Activated CD8-positive, alpha-beta T cell treated with anti-CD3 and anti-CD28 coated beads for 36 hours (primary cell): ENCODE measurements at regions of chr15 and their contacts with region 1.

Region 1: GRCh38 chr15:60548101-60548500 is 69.2 kb upstream of the ICE2 start:
- DNase-seq: peak; percentile 86
- ATAC-seq: peak; percentile 81
- H3K4me3 Mint-ChIP-seq: peak overlapping the region; percentile 70
- H3K27ac Mint-ChIP-seq: peak overlapping the region; percentile 96
- H3K4me1 Mint-ChIP-seq: peaks cover 93% of the 10 kb centered on the region
- H3K27me3 Mint-ChIP-seq: no peaks in the 10 kb centered on the region
- CTCF ChIP-seq: no peak

Region 2: GRCh38 chr15:60448668-60449360 is 99.3 kb before region 1 on chr15:
- CTCF ChIA-PET with region 1: no interaction called
- POLR2A ChIA-PET with region 1: no interaction called
- intact Hi-C with region 1: no loop called
- DNase-seq: no peak
- ATAC-seq: no peak
- H3K4me3 Mint-ChIP-seq: no peak overlapping the region
- H3K27ac Mint-ChIP-seq: no peak overlapping the region
- H3K4me1 Mint-ChIP-seq: no peaks in the 10 kb centered on the region
- H3K27me3 Mint-ChIP-seq: no peaks in the 10 kb centered on the region
- CTCF ChIP-seq: no peak

Region 3: GRCh38 chr15:60469893-60470641 is 78.0 kb before region 1 on chr15:
- CTCF ChIA-PET with region 1: no interaction called
- POLR2A ChIA-PET with region 1: no interaction called
- intact Hi-C with region 1: no loop called
- DNase-seq: no peak
- ATAC-seq: no peak
- H3K4me3 Mint-ChIP-seq: no peak overlapping the region
- H3K27ac Mint-ChIP-seq: peak overlapping the region; percentile 17
- H3K4me1 Mint-ChIP-seq: peaks cover 25% of the 10 kb centered on the region
- H3K27me3 Mint-ChIP-seq: no peaks in the 10 kb centered on the region
- CTCF ChIP-seq: no peak

Region 4: GRCh38 chr15:60568301-60568742 is 20.2 kb after region 1 on chr15:
- CTCF ChIA-PET with region 1: interaction called, 17 read pairs
- POLR2A ChIA-PET with region 1: interaction called, 10 read pairs
- intact Hi-C with region 1: no loop called
- DNase-seq: peak; percentile 39
- ATAC-seq: peak; percentile 17
- H3K4me3 Mint-ChIP-seq: peak overlapping the region; percentile 36
- H3K27ac Mint-ChIP-seq: peak overlapping the region; percentile 78
- H3K4me1 Mint-ChIP-seq: peaks cover 89% of the 10 kb centered on the region
- H3K27me3 Mint-ChIP-seq: no peaks in the 10 kb centered on the region
- CTCF ChIP-seq: no peak

Region 5: DNA sequence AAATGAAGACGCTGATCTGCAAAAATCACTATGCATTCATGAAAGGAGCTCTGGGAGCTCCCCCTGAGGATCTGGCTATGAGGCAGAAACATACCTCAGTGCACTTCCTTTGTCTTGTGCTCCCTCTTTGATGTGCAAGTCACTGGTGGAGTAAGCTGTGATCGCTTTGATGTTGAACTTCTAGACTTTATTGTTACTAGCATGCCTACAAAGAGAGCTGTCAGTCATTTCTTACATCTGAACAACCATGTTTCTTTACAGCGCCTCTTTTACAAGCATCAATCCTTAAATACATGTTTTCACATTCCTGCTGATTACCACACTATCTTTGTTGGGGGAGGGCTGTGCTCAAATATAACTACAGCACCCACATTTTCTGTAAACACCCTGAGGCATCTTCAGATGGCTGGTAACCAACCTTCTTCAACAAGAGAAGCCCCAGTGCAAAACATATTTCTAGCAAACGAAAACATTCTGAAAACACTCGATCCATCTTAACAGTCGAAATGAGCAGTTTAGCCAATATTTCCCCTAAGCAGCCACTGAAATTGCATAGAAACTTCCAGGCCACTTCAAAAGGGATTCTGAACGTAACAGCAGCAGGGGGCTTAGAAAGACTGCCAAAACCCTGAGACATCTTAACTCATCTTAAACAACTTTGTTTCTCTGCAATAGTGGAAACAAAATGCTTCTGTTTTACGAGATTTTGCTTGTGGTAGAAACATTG is 32.7 kb after region 1 on chr15:
- CTCF ChIA-PET with region 1: interaction called, 42 read pairs
- POLR2A ChIA-PET with region 1: interaction called, 11 read pairs
- intact Hi-C with region 1: loop called (anchors 5 kb)
- DNase-seq: peak; percentile 51
- ATAC-seq: peak; percentile 64
- H3K4me3 Mint-ChIP-seq: peak overlapping the region; percentile 72
- H3K27ac Mint-ChIP-seq: peak overlapping the region; percentile 96
- H3K4me1 Mint-ChIP-seq: peaks cover 86% of the 10 kb centered on the region
- H3K27me3 Mint-ChIP-seq: no peaks in the 10 kb centered on the region
- CTCF ChIP-seq: no peak